ENCODE measurements at regions of chr12 and their contacts with region 1.

Region 1: GRCh38 chr12:31896514-31897039 is 62.6 kb upstream of the RESF1 start:
- DNase-seq: peak; percentile 88
- H3K4me3 Mint-ChIP-seq: peak overlapping the region; percentile 73
- H3K27ac Mint-ChIP-seq: peak overlapping the region; percentile 99
- H3K4me1 Mint-ChIP-seq: peaks cover 51% of the 10 kb centered on the region
- H3K27me3 Mint-ChIP-seq: no peaks in the 10 kb centered on the region

Region 2: GRCh38 chr12:31659087-31659933 is 237.3 kb before region 1 on chr12 and contains the start of gene ETFBKMT:
- intact Hi-C with region 1: loop called (anchors 1 kb)
- DNase-seq: peak; percentile 95
- H3K4me3 Mint-ChIP-seq: peak within 1 kb of the TSS; percentile 94
- H3K27ac Mint-ChIP-seq: peak within 1 kb of the TSS; percentile 97
- H3K4me1 Mint-ChIP-seq: peaks cover 11% of the 10 kb centered on the region
- H3K27me3 Mint-ChIP-seq: no peaks in the 10 kb centered on the region
- total RNA-seq, gene ETFBKMT: 0.62 and 0.69 TPM in 2 replicates

Region 3: DNA sequence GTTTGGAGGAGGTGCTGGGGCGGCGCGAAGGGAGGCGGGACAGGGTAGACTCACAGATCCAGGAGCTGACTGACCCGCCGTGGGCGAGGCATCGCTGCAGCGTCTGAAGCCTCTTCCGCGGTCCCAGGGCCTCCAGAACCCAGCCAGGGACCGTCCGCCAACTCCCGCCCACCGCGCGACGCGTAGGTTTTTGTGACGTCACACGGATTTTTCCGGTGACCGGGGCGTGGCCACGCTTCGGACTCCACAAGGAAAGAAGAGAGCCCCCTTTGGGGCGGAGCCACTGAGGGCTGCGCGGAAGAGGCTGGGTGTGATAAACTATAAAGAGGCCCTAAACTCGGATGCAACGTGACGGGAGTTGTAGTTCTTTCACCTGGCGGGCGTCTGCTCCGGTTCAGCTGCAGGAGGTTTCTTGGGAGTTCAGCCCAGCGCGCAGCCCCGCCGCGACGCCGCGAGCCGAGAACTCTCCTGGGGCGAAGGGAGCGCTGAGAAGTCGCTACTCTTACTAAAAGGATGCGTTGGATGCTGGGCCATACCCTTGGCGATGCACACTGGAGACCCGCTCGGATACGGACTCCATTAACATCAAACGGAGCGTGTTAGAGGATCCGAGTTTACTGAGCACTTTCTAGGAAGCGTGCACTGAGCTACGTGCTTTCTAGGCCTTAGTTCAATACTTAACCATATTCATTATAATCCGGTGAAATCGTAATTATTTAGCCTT is 167.5 kb before region 1 on chr12 and contains the start of gene AMN1:
- intact Hi-C with region 1: loop called (anchors 1 kb)
- DNase-seq: peak; percentile 100
- H3K4me3 Mint-ChIP-seq: peak within 1 kb of the TSS; percentile 98
- H3K27ac Mint-ChIP-seq: peak within 1 kb of the TSS; percentile 99
- H3K4me1 Mint-ChIP-seq: peaks cover 53% of the 10 kb centered on the region
- H3K27me3 Mint-ChIP-seq: no peaks in the 10 kb centered on the region
- total RNA-seq, gene AMN1: 3.1 and 3.4 TPM in 2 replicates

Region 4: GRCh38 chr12:31804185-31804504 is 92.4 kb before region 1 on chr12:
- intact Hi-C with region 1: loop called (anchors 1 kb)
- DNase-seq: no peak
- H3K4me3 Mint-ChIP-seq: peak overlapping the region; percentile 31
- H3K27ac Mint-ChIP-seq: peak overlapping the region; percentile 14
- H3K4me1 Mint-ChIP-seq: peaks cover 40% of the 10 kb centered on the region
- H3K27me3 Mint-ChIP-seq: no peaks in the 10 kb centered on the region

Region 5: GRCh38 chr12:31928246-31929026 is 31.9 kb after region 1 on chr12:
- intact Hi-C with region 1: loop called (anchors 1 kb)
- DNase-seq: peak; percentile 12
- H3K4me3 Mint-ChIP-seq: peak overlapping the region; percentile 77
- H3K27ac Mint-ChIP-seq: peak overlapping the region; percentile 86
- H3K4me1 Mint-ChIP-seq: peaks cover 36% of the 10 kb centered on the region
- H3K27me3 Mint-ChIP-seq: no peaks in the 10 kb centered on the region

Region 6: DNA sequence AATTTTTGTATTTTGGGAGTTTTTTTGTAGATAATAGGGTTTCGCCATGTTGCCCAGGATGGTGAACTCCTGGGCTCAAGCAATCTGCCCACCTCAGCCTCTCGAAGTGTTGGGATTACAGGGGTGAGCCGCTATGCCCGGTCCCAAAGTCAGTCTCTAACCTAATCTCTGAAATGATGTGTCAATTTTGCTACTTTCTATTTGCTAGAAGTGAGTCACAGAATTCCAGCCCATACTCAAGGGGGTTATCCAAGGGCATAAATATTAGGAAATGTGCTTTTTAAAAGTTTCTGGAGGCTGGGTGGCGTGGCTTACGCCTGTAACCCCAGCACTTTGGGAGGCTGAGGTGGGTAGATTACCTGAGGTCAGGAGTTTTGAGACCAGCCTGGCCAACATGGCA is 103.1 kb after region 1 on chr12:
- intact Hi-C with region 1: no loop called
- DNase-seq: no peak
- H3K4me3 Mint-ChIP-seq: no peak overlapping the region
- H3K27ac Mint-ChIP-seq: no peak overlapping the region
- H3K4me1 Mint-ChIP-seq: no peaks in the 10 kb centered on the region
- H3K27me3 Mint-ChIP-seq: no peaks in the 10 kb centered on the region

Region 7: DNA sequence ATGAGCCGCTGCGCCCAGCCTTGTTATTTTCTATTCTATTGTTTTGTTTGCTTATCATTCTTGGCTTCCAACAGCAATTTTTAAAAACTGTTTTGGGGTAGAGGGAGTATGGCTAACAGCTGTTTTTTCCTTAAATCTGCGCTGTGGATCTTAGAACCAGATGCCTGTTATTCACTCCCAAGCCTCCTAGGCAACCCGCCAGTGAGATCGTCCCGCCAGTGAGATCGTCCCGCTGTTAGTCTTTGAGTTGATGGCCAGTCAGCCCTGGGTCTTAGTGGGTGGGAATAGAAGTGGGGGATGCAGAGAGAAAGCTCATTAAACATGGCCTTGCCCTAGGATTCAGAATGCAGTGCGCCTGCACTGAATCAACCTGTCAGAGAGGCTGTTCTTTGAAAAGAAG is 142.8 kb after region 1 on chr12:
- intact Hi-C with region 1: no loop called
- DNase-seq: no peak
- H3K4me3 Mint-ChIP-seq: no peak overlapping the region
- H3K27ac Mint-ChIP-seq: no peak overlapping the region
- H3K4me1 Mint-ChIP-seq: peaks cover 3% of the 10 kb centered on the region
- H3K27me3 Mint-ChIP-seq: no peaks in the 10 kb centered on the region

Region 8: DNA sequence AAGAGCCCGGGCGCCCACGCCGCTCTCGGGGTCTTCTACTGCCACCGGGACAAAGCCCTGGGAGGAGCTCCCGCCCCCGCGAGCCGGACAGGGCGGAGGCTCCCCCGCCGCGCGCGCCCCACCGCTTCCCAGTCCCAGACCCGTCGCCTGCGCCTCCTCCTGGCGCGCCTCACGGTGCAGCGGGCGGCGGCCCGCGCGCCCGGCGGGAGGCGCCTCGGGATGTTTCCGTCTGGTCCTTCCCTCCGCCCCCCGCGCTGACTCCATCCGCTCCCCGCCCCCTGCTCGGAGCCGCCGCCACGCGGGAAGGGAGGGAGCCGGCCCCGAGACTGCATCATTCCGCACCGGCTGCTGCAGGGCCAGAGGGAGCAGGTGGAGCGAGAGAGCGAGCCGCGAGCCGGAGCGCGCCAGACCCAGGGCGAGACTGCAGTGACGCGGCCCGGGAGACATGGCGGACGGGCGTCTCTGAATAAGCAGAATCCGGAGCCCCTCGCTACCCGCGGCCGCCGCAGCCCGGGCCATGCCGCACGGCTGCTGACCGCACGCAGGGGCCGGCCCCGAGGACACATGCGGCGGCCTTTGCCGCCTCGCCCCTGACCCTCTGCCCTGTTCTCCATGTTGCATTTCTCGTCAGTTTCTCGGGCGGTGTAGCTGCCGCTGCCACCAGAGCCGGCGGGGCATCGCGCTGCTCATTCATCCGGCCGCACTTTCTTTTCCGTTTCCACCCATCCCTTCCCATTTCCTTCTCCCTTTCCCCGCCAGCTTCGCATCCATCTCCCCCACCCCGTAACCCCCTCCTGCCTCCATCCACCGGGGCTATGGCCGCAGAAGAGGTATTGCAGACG is 210.2 kb after region 1 on chr12 and contains the start of gene BICD1:
- intact Hi-C with region 1: loop called (anchors 2 kb)
- DNase-seq: peak; percentile 76
- H3K4me3 Mint-ChIP-seq: peak within 1 kb of the TSS; percentile 98
- H3K27ac Mint-ChIP-seq: peak within 1 kb of the TSS; percentile 87
- H3K4me1 Mint-ChIP-seq: peaks cover 36% of the 10 kb centered on the region
- H3K27me3 Mint-ChIP-seq: peaks cover 19% of the 10 kb centered on the region
- total RNA-seq, gene BICD1: 20.9 and 22.2 TPM in 2 replicates

Measured in activated T-helper 1 cell treated with anti-CD3 and anti-CD28 coated beads, Interleukin-12 subunit alpha, Interleukin-12 subunit beta, Interleukin-2, Interleukin-4 antibody, amounts not matched to agents 30 ng/mL and 10 ng/mL and 1 ng/mL, durations not matched to agents 14 hours and 24 hours and 36 hours (primary cell).